Activated CD8-positive, alpha-beta memory T cell treated with anti-CD3 and anti-CD28 coated beads, Interleukin-2, amount 10 ng/mL, durations not matched to agents 7 days and 5 days (primary cell): ENCODE measurements at regions of chr16 and their contacts with region 1.

Region 1: DNA sequence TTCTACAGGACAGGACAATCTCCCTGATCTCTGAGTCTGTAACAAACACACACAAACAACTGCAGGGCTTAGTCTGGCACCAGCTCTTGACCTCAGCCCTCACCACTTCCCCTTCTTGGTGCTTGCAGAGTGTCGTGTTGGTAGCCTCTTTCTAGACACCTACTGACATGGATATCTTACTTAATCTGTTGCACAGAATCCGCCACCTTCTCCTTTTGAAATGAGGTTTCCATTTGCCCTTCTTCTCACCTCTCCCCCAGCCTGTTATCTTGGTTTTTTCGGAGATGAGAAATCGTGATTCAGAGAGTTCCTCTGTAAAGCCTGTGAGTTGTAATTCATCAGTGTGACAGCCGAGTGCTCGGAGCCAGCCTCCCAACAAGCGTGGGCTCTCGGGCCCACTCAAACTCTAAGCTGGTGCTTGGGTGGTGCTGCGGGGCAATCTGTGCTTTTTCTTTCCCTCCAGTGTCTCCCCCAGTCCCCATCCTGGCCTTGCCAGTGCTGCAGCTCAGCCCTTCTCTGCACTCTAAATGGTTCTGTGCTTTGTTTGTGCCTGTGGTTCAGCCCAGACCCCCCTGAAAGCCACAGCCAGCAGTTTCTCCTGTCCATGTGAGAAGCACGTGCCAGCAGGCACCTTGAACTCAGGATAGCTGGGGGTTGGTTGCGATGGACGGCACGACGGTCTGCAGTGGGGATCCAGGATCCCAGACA is 28.1 kb downstream of the KIAA0513 start:
- DNase-seq: peak; percentile 96
- ATAC-seq: peak; percentile 94
- H3K4me3 Mint-ChIP-seq: peak overlapping the region; percentile 57
- H3K27ac Mint-ChIP-seq: peak overlapping the region; percentile 91
- H3K4me1 Mint-ChIP-seq: peaks cover 33% of the 10 kb centered on the region
- H3K27me3 Mint-ChIP-seq: no peaks in the 10 kb centered on the region

Region 2: GRCh38 chr16:85010931-85011845 is 44.5 kb before region 1 on chr16 and contains the start of gene ZDHHC7:
- CTCF ChIA-PET with region 1: interaction called, 11 read pairs
- DNase-seq: peak; percentile 88
- ATAC-seq: peak; percentile 95
- H3K4me3 Mint-ChIP-seq: peak within 1 kb of the TSS; percentile 91
- H3K27ac Mint-ChIP-seq: peak within 1 kb of the TSS; percentile 98
- H3K4me1 Mint-ChIP-seq: peaks cover 30% of the 10 kb centered on the region
- H3K27me3 Mint-ChIP-seq: peaks cover 5% of the 10 kb centered on the region
- total RNA-seq, gene ZDHHC7: 22.3 to 27.1 TPM